ENCODE measurements at regions of chr1 and their contacts with region 1.

Region 1: DNA sequence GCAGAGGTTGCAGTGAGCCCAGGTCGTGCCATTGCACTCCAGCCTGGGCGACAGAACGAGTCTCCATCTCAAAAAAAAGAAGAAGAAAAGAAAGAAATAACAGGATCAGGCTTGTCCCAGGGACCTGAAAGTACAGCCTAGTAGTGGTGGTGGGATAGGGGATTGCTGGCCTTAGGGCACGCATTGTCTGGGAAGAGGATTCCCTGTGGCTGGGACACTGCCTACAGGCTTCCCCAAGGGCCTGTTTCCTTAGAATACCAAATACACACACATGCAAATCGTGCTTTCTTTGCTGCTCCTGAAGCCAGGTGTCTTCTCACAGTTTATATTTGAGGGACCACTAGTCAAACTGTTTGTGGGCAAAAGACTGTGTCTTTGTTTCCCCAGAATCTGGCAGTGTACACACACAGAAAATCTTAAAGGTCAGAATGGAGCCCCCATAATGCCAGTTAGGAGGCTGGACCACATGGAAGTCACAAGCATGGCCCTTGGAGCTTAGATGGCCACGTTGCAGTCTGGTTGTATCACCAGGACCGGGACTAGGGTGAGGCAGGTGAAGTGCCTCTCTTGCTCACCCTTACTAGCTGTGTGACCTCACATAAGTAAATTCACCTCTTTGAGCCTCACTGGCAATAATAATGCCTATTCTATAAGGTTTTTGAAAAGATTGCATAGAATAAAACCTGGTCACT is 12.7 kb upstream of the ASAP3 start:
- DNase-seq: no peak
- H3K4me3 ChIP-seq: no peak overlapping the region
- H3K4me3 Mint-ChIP-seq: no peak overlapping the region
- H3K27ac Mint-ChIP-seq: no peak overlapping the region
- H3K4me1 ChIP-seq: no peaks in the 10 kb centered on the region
- H3K4me1 Mint-ChIP-seq: no peaks in the 10 kb centered on the region
- H3K27me3 ChIP-seq: no peaks in the 10 kb centered on the region
- H3K27me3 Mint-ChIP-seq: no peaks in the 10 kb centered on the region
- CTCF ChIP-seq: no peak

Region 2: DNA sequence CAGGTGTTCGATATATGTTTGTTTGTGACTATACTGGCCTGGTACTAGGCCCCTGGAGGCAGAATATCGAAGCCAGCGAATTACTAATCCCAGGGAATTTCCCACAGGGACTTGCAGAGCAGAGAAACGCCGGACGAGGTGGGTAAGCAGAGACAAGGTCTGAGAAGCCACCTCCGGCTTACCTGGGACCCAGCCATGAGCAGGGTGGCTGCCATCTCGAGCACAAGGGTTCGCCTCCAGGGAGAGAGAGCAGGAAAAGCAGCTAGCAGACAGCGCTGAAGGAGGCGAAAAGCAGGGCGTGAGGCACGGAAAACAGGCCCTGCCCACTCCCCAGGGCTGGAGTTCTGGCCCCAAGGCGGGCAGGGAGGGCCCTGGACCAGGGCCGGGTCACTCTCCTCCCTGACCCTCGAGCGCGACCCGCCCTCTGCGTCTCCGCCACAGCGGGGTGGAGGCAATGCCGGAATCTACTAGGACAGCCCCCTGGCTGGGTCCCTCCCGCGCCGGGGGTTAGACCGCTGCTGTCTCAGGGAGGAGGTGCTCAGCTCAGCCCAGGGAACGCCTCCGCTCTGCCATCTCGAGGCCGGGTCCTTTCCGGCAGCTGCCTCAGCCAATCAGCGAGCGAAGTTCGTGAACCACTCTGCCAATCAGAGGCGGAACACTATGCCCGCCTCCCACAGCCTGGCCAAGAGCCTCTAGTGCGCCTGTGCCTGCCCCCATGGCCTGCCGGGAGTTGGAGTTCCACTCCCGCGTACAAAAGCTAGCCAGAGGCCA is 128.7 kb before region 1 on chr1:
- CTCF ChIA-PET with region 1: interaction called, 12 read pairs
- POLR2A ChIA-PET with region 1: no interaction called
- intact Hi-C with region 1: no loop called
- DNase-seq: peak; percentile 98
- H3K4me3 ChIP-seq: peak overlapping the region; percentile 73
- H3K4me3 Mint-ChIP-seq: peak overlapping the region; percentile 80
- H3K27ac Mint-ChIP-seq: peak overlapping the region; percentile 85
- H3K4me1 ChIP-seq: peaks cover 22% of the 10 kb centered on the region
- H3K4me1 Mint-ChIP-seq: no peaks in the 10 kb centered on the region
- H3K27me3 ChIP-seq: no peaks in the 10 kb centered on the region
- H3K27me3 Mint-ChIP-seq: no peaks in the 10 kb centered on the region
- CTCF ChIP-seq: no peak

Region 3: DNA sequence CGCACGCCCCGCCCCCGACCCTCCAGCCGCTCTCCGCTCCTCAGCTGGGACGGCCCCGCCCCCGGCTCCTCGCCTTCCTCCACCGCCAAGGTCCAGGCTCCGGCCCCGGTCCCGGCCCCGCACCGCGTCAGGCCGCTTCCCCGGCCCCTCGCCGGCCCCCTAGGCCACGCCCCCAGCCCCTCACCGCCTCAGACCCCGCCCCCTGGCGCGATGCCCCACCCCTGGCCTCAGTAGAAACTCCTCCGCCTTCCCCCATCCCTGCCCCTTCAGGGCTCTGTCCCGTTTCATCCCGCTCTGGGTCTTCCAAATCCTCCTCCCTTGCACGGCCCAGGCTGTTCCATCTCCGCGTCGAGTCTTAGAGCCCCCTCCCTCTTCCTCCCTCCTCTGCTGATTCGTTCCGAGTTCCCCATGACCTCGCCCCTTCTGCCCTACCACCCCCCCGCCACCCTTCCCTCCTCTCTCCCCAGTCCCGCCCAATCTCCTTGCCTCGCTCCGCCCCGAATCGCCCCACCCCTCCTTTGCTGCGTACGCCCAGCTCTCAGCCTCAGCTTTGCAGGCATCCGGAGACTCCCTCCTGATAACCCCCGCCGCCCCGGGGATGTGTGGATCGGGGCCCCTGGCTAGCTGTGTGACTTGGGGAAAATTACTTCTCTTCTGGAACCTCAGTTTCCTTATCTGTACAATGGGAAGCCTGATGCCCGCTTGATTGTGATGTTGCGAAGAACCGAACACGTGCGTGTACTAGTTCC is 12.2 kb before region 1 on chr1:
- CTCF ChIA-PET with region 1: interaction called, 16 read pairs
- POLR2A ChIA-PET with region 1: interaction called, 10 read pairs
- intact Hi-C with region 1: no loop called
- DNase-seq: peak; percentile 92 to 93
- H3K4me3 ChIP-seq: peak overlapping the region; percentile 85
- H3K4me3 Mint-ChIP-seq: peak overlapping the region; percentile 81
- H3K27ac Mint-ChIP-seq: peak overlapping the region; percentile 60
- H3K4me1 ChIP-seq: peaks cover 4% of the 10 kb centered on the region
- H3K4me1 Mint-ChIP-seq: peaks cover 8% of the 10 kb centered on the region
- H3K27me3 ChIP-seq: no peaks in the 10 kb centered on the region
- H3K27me3 Mint-ChIP-seq: peaks cover 5% of the 10 kb centered on the region
- CTCF ChIP-seq: no peak

Region 4: GRCh38 chr1:23530747-23531561 is 34.3 kb after region 1 on chr1 and contains the start of gene E2F2:
- CTCF ChIA-PET with region 1: interaction called, 14 read pairs
- POLR2A ChIA-PET with region 1: no interaction called
- intact Hi-C with region 1: no loop called
- DNase-seq: peak; percentile 84 to 86
- H3K4me3 ChIP-seq: peak within 1 kb of the TSS; percentile 86
- H3K4me3 Mint-ChIP-seq: peak within 1 kb of the TSS; percentile 91
- H3K27ac Mint-ChIP-seq: peak within 1 kb of the TSS; percentile 93
- H3K4me1 ChIP-seq: peaks cover 22% of the 10 kb centered on the region
- H3K4me1 Mint-ChIP-seq: peaks cover 6% of the 10 kb centered on the region
- H3K27me3 ChIP-seq: no peaks in the 10 kb centered on the region
- H3K27me3 Mint-ChIP-seq: no peaks in the 10 kb centered on the region
- CTCF ChIP-seq: no peak
- total RNA-seq, gene E2F2: 9.1 and 9.5 TPM in 2 replicates

Region 5: GRCh38 chr1:23539698-23540266 is 43.1 kb after region 1 on chr1:
- CTCF ChIA-PET with region 1: interaction called, 88 read pairs
- POLR2A ChIA-PET with region 1: interaction called, 3 read pairs
- intact Hi-C with region 1: loop called (anchors 1 kb)
- DNase-seq: peak; percentile 92
- H3K4me3 ChIP-seq: no peak overlapping the region
- H3K4me3 Mint-ChIP-seq: peak overlapping the region; percentile 44
- H3K27ac Mint-ChIP-seq: no peak overlapping the region
- H3K4me1 ChIP-seq: no peaks in the 10 kb centered on the region
- H3K4me1 Mint-ChIP-seq: no peaks in the 10 kb centered on the region
- H3K27me3 ChIP-seq: no peaks in the 10 kb centered on the region
- H3K27me3 Mint-ChIP-seq: no peaks in the 10 kb centered on the region
- CTCF ChIP-seq: peak; percentile 76 to 86

Region 6: DNA sequence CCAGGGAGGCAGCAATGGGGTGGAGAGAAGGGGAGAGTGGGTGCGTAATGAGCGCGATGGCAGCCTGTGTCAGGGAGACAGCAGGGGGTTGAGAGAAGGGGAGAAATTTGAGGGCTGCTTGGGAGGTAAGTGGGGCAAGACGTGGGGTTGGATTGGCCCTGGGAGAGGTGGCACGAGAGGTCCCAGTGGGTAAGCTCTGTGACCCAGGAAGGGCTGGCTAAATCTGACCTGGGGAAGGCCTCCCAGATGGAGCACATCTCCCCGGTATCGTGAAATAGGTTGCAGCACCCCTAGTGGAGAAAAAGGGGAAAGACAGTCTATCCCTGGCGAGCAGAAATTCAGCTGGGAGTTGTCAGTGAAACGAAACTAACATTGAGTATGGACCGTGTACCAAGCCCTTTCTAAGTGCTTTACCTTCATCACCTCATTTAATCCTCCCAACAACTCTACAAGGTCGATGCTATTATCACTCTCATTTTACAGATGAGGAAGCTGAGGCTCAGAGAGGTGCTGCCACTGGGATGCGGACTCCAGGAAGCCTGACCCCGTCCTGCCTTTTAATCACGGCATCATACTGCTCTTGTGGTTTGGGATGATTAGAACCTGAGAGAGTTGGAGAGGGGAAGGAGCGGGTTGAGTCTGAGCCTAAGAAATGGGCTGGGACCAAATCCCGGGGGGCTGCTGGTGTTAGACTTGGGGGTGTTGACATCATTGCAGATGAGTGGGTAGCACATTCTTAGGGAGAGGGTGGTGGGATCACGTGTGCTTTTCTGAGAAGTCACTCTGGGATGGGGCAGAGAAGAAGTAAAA is 138.4 kb after region 1 on chr1:
- CTCF ChIA-PET with region 1: interaction called, 14 read pairs
- POLR2A ChIA-PET with region 1: no interaction called
- intact Hi-C with region 1: no loop called
- DNase-seq: peak; percentile 51 to 65
- H3K4me3 ChIP-seq: no peak overlapping the region
- H3K4me3 Mint-ChIP-seq: no peak overlapping the region
- H3K27ac Mint-ChIP-seq: no peak overlapping the region
- H3K4me1 ChIP-seq: no peaks in the 10 kb centered on the region
- H3K4me1 Mint-ChIP-seq: peaks cover 8% of the 10 kb centered on the region
- H3K27me3 ChIP-seq: no peaks in the 10 kb centered on the region
- H3K27me3 Mint-ChIP-seq: peaks cover 3% of the 10 kb centered on the region
- CTCF ChIP-seq: peak; percentile 75 to 81